HEK293 (cell line): ENCODE measurements at regions of chr1 and their contacts with region 1.

Region 1: DNA sequence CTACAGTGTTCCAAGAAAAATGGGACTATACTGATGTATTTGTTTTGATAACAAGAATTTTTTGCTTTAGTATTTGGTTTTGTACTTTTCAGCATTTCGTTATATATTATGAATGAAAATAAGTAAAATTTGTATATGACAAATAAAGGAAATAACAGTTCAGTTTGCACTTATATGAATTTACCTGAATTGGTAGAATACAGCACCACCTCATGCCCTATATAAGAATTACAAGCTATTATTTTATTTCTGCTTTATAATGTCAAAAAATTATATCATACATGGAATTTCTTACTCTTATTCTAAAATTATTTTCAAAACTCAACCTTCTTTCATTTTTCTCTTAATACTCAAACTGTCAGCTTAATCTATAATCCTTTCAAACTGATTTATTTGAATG is 14.6 kb downstream of the EFCAB7 start:
- H3K4me3 ChIP-seq: no peak overlapping the region
- H3K27ac ChIP-seq: no peak overlapping the region
- H3K4me1 ChIP-seq: no peaks in the 10 kb centered on the region
- CTCF ChIP-seq: no peak

Region 2: GRCh38 chr1:63466759-63467158 is 71.2 kb before region 1 on chr1:
- CTCF ChIA-PET with region 1: interaction called, 11 read pairs
- POLR2A ChIA-PET with region 1: no interaction called
- H3K4me3 ChIP-seq: no peak overlapping the region
- H3K27ac ChIP-seq: no peak overlapping the region
- H3K4me1 ChIP-seq: no peaks in the 10 kb centered on the region
- CTCF ChIP-seq: no peak

Region 3: GRCh38 chr1:63557365-63557987 is 19.5 kb after region 1 on chr1:
- CTCF ChIA-PET with region 1: interaction called, 11 read pairs
- POLR2A ChIA-PET with region 1: no interaction called
- H3K4me3 ChIP-seq: no peak overlapping the region
- H3K27ac ChIP-seq: no peak overlapping the region
- H3K4me1 ChIP-seq: no peaks in the 10 kb centered on the region
- CTCF ChIP-seq: no peak

Region 4: DNA sequence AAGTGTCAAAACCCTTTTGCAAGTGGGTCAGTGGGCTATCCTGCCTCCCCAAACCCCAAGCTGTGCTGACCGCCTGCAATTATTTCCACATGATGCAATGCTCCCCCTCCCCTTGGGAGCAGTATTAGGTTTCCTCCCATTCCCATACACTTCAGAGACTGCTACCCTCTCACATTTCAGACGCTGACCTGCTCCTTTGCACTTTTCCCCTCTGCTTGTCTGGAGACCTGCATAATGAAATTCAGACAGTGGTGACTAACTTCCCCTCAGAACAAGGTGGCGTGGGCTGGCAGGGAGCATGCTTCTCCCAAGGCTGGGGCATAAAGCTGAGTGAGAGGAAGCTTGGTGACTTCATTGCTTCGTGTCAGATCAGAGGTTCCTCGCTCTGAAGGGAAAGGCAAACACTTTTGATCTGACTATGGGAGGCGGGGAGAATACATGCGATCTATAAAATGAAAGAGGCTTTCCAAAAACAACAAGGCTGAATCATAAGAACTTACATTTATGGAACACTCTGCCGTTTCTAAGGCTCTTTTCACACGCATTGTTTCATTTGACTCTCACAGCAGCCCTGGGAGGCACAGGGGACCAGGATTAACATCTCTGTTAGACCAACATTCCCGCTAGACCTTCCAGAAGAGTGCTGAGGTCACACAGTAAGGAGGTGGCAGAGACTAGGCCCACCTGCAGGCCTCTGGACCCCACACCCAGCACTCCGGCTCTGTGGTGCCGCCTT is 208.4 kb after region 1 on chr1:
- CTCF ChIA-PET with region 1: no interaction called
- POLR2A ChIA-PET with region 1: no interaction called
- H3K4me3 ChIP-seq: no peak overlapping the region
- H3K27ac ChIP-seq: peak overlapping the region; percentile 77
- H3K4me1 ChIP-seq: peaks cover 3% of the 10 kb centered on the region; the same call in 1 of the 2 replicates
- CTCF ChIP-seq: no peak